ENCODE measurements at regions of chr7 and their contacts with region 1.

Region 1: GRCh38 chr7:20199015-20199737 is 18.0 kb downstream of the MACC1 start:
- DNase-seq: peak; percentile 42
- CTCF ChIP-seq: no peak

Region 2: DNA sequence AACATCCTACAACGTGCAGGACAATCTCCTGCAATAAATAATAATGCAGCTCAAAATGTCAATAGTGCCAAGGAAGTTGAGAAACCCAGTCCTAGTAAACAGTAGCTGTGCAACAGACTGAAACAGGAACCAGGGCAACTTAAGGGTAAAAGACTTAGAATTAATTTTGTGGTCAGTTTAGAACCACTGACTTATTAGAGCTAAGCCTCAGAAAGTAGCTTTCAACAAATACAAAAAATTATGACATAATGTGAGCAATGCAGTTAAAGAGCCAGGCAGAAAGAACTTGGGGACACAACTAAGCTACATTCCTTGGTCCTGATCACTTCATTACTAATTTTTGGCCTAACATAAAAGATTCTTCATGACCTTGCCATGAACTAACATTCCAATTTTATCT is 177.3 kb before region 1 on chr7:
- CTCF ChIA-PET with region 1: no interaction called
- POLR2A ChIA-PET with region 1: no interaction called
- DNase-seq: no peak
- CTCF ChIP-seq: no peak

Region 3: DNA sequence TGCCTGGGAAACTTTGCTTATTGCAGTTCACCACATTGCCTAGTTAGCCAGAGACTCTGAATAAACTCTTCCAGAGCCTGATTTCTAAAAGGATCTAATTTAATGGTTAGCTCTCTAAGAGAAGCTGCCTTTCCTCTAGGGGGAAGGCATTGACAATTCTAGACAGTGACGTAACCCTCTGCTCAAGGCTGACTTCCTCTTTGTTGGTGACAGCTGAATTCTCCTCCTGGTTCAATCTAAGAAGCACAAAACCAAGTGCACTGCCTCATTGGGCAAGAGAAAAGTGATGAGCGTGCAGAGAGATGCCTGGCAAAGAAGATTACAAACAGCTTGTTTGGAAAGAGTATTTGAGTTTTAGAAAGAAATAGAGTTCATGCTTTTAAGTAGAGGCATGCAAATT is 84.7 kb before region 1 on chr7:
- CTCF ChIA-PET with region 1: interaction called, 14 read pairs
- POLR2A ChIA-PET with region 1: no interaction called
- DNase-seq: peak; percentile 41
- CTCF ChIP-seq: no peak

Region 4: GRCh38 chr7:20172736-20173334 is 26.3 kb before region 1 on chr7:
- CTCF ChIA-PET with region 1: interaction called, 23 read pairs
- POLR2A ChIA-PET with region 1: no interaction called
- DNase-seq: peak; percentile 37
- CTCF ChIP-seq: peak; percentile 47

Region 5: DNA sequence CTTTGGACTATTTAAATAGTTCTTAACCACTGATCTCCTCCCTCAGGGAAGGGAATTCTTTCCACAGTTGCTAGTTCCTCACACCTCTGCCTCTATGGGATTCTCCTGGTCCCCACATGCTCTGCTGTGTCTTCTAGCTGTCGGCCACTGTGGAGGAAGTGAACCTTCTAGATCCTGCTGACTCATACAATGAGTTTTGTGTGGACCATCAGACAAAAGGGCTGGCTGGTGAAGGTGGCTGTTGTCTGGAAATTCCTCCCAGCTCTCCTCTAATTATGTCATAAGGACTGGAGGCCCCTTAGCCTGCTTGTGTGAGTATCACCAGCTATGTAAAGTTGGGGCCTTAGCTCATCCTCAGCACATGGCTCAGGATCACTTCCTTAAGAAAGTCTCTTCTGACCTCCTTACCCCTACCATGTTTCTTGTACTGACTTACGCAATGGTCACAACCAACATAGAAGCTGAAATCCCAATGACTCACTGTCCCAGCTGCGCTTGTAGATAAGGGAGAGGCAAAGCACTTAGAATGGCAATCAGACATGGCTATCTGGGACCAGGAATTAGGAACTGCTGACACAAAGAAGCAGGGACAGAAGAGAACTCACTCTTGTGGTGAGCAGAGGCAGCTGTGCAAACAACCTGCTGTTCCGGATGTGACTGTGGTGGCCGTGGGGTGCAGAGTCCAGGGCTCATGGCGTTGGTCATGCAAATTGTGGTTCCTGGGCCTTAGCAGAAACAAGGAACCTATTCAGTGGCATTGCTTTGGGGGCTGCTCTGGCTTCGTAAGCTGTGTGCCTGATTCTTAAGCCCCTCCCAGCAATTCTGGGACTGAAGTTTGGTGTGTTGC is 20.5 kb after region 1 on chr7:
- CTCF ChIA-PET with region 1: interaction called, 41 read pairs
- POLR2A ChIA-PET with region 1: interaction called, 5 read pairs
- DNase-seq: peak; percentile 54
- CTCF ChIP-seq: no peak

Region 6: GRCh38 chr7:20310963-20311742 is 112.0 kb after region 1 on chr7:
- CTCF ChIA-PET with region 1: interaction called, 17 read pairs
- POLR2A ChIA-PET with region 1: no interaction called
- DNase-seq: no peak
- CTCF ChIP-seq: peak; percentile 24